GM12878 (cell line): ENCODE measurements at regions of chr12 and their contacts with region 1.

Region 1: GRCh38 chr12:100142851-100143559 is at the start of gene BLTP3B:
- DNase-seq: peak; percentile 27
- ATAC-seq: peak; percentile 92
- H3K4me3 ChIP-seq: peak within 1 kb of the TSS; percentile 88
- H3K27ac ChIP-seq: peak within 1 kb of the TSS; percentile 94
- H3K4me1 ChIP-seq: peaks cover 8% of the 10 kb centered on the region
- H3K27me3 ChIP-seq: no peaks in the 10 kb centered on the region
- CTCF ChIP-seq: no peak
- EP300 ChIP-seq: no peak
- POLR2A ChIP-seq: peak; percentile 48
- RAD21 ChIP-seq: no peak
- polyA plus RNA-seq, gene BLTP3B: 3.6 to 6.2 TPM

Region 2: GRCh38 chr12:100043631-100044030 is 99.4 kb before region 1 on chr12:
- CTCF ChIA-PET with region 1: no interaction called
- POLR2A ChIA-PET with region 1: no interaction called
- RAD21 ChIA-PET with region 1: no interaction called
- SMC1A ChIA-PET with region 1: no interaction called
- in situ Hi-C with region 1: no loop called
- intact Hi-C with region 1: no loop called
- DNase-seq: no peak
- ATAC-seq: no peak
- H3K4me3 ChIP-seq: no peak overlapping the region
- H3K27ac ChIP-seq: no peak overlapping the region
- H3K4me1 ChIP-seq: no peaks in the 10 kb centered on the region
- H3K27me3 ChIP-seq: no peaks in the 10 kb centered on the region
- CTCF ChIP-seq: no peak
- EP300 ChIP-seq: no peak
- POLR2A ChIP-seq: no peak
- RAD21 ChIP-seq: no peak

Region 3: DNA sequence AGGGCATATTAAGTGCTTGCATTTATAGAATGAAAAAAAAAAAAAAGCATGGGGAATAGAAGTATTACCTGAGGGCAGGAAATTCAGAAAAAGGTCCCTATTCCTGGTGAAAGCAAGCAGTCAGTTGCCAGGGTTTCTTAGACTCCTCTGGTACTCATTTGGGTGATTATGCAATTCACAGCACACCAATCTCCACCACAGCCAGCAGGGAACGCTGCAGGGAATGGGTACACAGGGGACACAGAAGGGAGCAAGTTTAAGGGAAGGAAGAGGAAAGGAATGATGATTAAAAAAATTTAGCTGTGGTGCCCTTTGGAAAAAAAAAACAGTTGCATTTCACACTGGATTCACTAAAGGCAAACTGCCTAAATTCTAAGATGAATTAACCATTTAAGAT is 14.5 kb before region 1 on chr12:
- CTCF ChIA-PET with region 1: interaction called, 24 read pairs
- POLR2A ChIA-PET with region 1: interaction called, 3 read pairs
- RAD21 ChIA-PET with region 1: interaction called, 4 read pairs
- SMC1A ChIA-PET with region 1: interaction called, 4 read pairs
- in situ Hi-C with region 1: no loop called
- intact Hi-C with region 1: no loop called
- DNase-seq: no peak
- ATAC-seq: peak; percentile 61
- H3K4me3 ChIP-seq: no peak overlapping the region
- H3K27ac ChIP-seq: no peak overlapping the region
- H3K4me1 ChIP-seq: no peaks in the 10 kb centered on the region
- H3K27me3 ChIP-seq: no peaks in the 10 kb centered on the region
- CTCF ChIP-seq: peak in 2 of 3 experiments; percentile 7 to 21; a peak in 3 of 6 replicates
- EP300 ChIP-seq: no peak
- POLR2A ChIP-seq: no peak
- RAD21 ChIP-seq: 0 out of 2 replicates have a peak, but pooled peaks have one; percentile 20

Region 4: DNA sequence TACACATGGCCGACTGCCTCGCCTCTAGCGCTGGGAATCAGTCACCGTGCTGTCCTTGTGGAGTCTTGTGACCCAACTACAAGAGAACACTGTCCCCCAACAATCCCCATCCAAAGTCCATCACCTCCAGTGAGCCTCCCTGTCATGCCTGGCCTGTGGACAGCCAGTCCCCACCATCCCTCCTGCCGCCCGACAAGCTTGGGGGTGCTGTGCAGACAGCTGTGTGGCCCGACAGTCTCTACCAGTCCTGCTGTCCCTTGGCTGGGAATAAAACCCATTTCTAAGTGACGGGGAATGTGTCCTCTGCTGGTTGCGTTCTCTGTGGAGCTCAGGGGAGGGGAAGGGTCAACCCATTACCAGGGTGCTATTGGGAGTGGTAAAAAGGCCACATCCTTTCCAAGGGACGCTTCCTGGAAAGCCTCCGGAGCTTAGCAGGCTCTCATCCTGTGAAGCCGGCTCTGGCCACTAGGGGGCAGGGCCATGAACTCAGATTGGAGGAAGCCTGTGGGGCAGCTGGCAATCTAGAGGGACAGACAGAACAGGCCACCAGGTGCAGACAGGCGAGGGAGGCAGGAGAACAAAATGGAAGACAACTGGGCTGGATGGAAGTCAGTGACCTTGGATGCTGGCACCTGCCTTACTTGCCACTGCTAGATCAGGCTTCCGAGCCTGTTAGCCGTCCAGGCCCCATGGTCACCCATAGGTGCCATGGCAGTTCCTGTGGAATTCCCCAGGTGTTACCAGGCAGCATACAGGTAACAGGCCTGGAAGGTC is 11.7 kb after region 1 on chr12:
- CTCF ChIA-PET with region 1: interaction called, 45 read pairs
- POLR2A ChIA-PET with region 1: no interaction called
- RAD21 ChIA-PET with region 1: no interaction called
- SMC1A ChIA-PET with region 1: interaction called, 3 read pairs
- in situ Hi-C with region 1: no loop called
- intact Hi-C with region 1: no loop called
- DNase-seq: no peak
- ATAC-seq: peak; percentile 91
- H3K4me3 ChIP-seq: no peak overlapping the region
- H3K27ac ChIP-seq: no peak overlapping the region
- H3K4me1 ChIP-seq: 0 out of 2 replicates have a peak, but pooled peaks cover 3% of the 10 kb centered on the region
- H3K27me3 ChIP-seq: no peaks in the 10 kb centered on the region
- CTCF ChIP-seq: peak; percentile 63 to 94 (median 91)
- EP300 ChIP-seq: no peak
- POLR2A ChIP-seq: no peak
- RAD21 ChIP-seq: peak; percentile 56

Region 5: GRCh38 chr12:100163416-100164152 is 20.6 kb after region 1 on chr12:
- CTCF ChIA-PET with region 1: interaction called, 10 read pairs
- POLR2A ChIA-PET with region 1: interaction called, 3 read pairs
- RAD21 ChIA-PET with region 1: interaction called, 3 read pairs
- SMC1A ChIA-PET with region 1: no interaction called
- in situ Hi-C with region 1: no loop called
- intact Hi-C with region 1: no loop called
- DNase-seq: no peak
- ATAC-seq: peak; percentile 100
- H3K4me3 ChIP-seq: no peak overlapping the region
- H3K27ac ChIP-seq: no peak overlapping the region; the same call in 1 of the 2 replicates
- H3K4me1 ChIP-seq: 0 out of 2 replicates have a peak, but pooled peaks cover 3% of the 10 kb centered on the region
- H3K27me3 ChIP-seq: no peaks in the 10 kb centered on the region
- CTCF ChIP-seq: peak; percentile 7 to 14 (median 12); a peak in 2 of 6 replicates
- EP300 ChIP-seq: no peak
- POLR2A ChIP-seq: peak; percentile 55; the same call in 1 of the 2 replicates
- RAD21 ChIP-seq: 0 out of 2 replicates have a peak, but pooled peaks have one; percentile 5

Region 6: DNA sequence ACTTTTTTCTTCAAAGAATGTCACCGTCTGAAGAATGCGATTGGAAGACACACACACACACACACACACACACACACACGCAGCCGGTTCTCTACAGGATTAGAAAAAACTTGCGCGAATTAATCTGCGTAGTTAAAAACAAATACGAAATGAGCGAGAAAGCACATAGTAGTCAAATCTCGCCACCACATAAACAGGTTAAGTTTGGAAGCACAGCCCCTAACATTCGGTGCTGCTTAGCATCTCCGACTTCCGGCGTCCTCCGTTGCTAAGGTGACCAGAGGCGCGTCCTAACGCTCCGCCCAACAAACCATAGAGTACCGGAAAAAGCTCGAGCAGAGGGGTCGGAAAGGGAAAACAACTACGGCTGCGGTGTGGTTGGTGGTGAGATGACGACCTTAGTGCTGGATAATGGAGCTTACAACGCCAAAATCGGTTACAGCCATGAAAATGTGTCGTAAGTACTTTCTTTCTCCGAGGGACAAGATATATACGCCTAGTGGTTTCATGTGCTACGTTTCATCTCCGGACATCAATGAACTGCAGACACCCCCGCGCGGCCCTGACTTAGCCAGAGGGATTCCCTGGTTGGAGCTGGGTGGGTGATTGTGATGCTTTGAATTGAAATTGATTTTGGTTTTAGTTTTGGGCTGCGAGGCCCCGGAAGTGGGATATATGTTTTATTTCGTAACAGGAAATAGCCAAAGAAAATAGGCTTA is 57.6 kb after region 1 on chr12 and contains the start of gene ACTR6:
- CTCF ChIA-PET with region 1: interaction called, 9 read pairs
- POLR2A ChIA-PET with region 1: interaction called, 4 read pairs
- RAD21 ChIA-PET with region 1: interaction called, 4 read pairs
- SMC1A ChIA-PET with region 1: interaction called, 5 read pairs
- in situ Hi-C with region 1: no loop called
- intact Hi-C with region 1: loop called (anchors 1 kb)
- DNase-seq: peak; percentile 91
- ATAC-seq: peak; percentile 87
- H3K4me3 ChIP-seq: peak within 1 kb of the TSS; percentile 82
- H3K27ac ChIP-seq: peak within 1 kb of the TSS; percentile 83
- H3K4me1 ChIP-seq: peaks cover 6% of the 10 kb centered on the region; the same call in 1 of the 2 replicates
- H3K27me3 ChIP-seq: no peaks in the 10 kb centered on the region
- CTCF ChIP-seq: no peak
- EP300 ChIP-seq: peak in 1 of 2 experiments; percentile 2; a peak in 1 of 4 replicates
- POLR2A ChIP-seq: peak; percentile 82
- RAD21 ChIP-seq: no peak
- polyA plus RNA-seq, gene ACTR6: 56.1 to 62.4 TPM

Region 7: GRCh38 chr12:100266835-100267618 is 124.0 kb after region 1 on chr12 and contains the starts of genes DEPDC4 and SCYL2:
- CTCF ChIA-PET with region 1: interaction called, 3 read pairs
- POLR2A ChIA-PET with region 1: no interaction called
- RAD21 ChIA-PET with region 1: interaction called, 3 read pairs
- SMC1A ChIA-PET with region 1: interaction called, 4 read pairs
- in situ Hi-C with region 1: no loop called
- intact Hi-C with region 1: loop called (anchors 5 kb)
- DNase-seq: peak; percentile 84
- ATAC-seq: peak; percentile 89
- H3K4me3 ChIP-seq: peak within 1 kb of the TSS; percentile 98
- H3K27ac ChIP-seq: peak within 1 kb of the TSS; percentile 78
- H3K4me1 ChIP-seq: peaks cover 3% of the 10 kb centered on the region; the same call in 1 of the 2 replicates
- H3K27me3 ChIP-seq: no peaks in the 10 kb centered on the region
- CTCF ChIP-seq: no peak
- EP300 ChIP-seq: no peak
- POLR2A ChIP-seq: peak; percentile 74
- RAD21 ChIP-seq: no peak
- polyA plus RNA-seq, gene DEPDC4: 2.0 to 4.0 TPM
- polyA plus RNA-seq, gene SCYL2: 5.4 to 7.2 TPM